Activated CD4-positive, alpha-beta memory T cell treated with anti-CD3 and anti-CD28 coated beads for 36 hours (primary cell): ENCODE measurements at regions of chr12 and their contacts with region 1.

Region 1: DNA sequence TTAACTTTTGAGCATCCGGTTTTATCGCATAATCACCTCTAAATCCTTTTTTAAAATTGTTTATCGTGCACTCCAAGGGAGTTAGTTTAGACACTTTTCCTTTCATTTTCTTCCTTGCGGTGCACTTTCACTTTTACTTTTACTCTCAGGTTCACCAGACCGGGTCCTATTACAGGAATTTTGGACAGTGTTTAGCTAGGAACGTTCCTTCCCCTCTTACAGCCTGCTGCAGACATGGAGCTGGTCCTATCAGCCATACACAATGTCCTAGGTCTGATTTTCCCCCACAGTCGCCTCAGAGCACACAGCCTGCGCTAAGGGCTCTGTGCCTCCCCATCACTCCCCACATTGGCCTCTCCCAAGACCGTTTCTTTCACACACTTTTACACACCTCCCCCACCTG is 103.9 kb downstream of the ALG10 start:
- DNase-seq: no peak
- H3K4me3 Mint-ChIP-seq: peak overlapping the region; percentile 9
- H3K27ac Mint-ChIP-seq: no peak overlapping the region
- H3K4me1 Mint-ChIP-seq: peaks cover 8% of the 10 kb centered on the region
- H3K27me3 Mint-ChIP-seq: peaks cover 17% of the 10 kb centered on the region

Region 2: GRCh38 chr12:34218165-34219045 is 92.2 kb after region 1 on chr12:
- CTCF ChIA-PET with region 1: interaction called, 9 read pairs
- POLR2A ChIA-PET with region 1: no interaction called
- intact Hi-C with region 1: loop called (anchors 1 kb)
- DNase-seq: peak; percentile 73
- H3K4me3 Mint-ChIP-seq: peak overlapping the region; percentile 56
- H3K27ac Mint-ChIP-seq: no peak overlapping the region
- H3K4me1 Mint-ChIP-seq: peaks cover 2% of the 10 kb centered on the region
- H3K27me3 Mint-ChIP-seq: peaks cover 2% of the 10 kb centered on the region

Region 3: DNA sequence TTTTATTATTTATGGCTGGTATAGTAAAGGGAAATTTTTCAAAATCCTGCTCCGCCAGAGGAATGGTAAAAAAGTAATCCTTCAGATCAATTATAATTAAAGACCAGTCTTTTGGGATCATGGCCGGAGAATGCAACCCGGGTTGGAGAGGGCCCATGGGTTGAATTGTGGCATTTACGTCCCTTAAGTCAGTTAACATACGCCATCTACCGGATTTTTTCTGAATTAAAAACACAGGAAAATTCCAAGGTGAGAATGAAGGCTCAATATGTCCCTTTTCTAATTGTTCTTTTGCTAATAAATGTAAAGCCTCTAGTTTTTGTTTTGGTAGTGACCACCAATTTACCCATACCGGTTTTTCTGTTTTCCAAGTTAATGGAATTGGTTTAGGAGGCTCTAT is 498.9 kb after region 1 on chr12:
- CTCF ChIA-PET with region 1: no interaction called
- POLR2A ChIA-PET with region 1: no interaction called
- intact Hi-C with region 1: loop called (anchors 10 kb)
- DNase-seq: no peak
- H3K4me3 Mint-ChIP-seq: no peak overlapping the region
- H3K27ac Mint-ChIP-seq: no peak overlapping the region
- H3K4me1 Mint-ChIP-seq: no peaks in the 10 kb centered on the region
- H3K27me3 Mint-ChIP-seq: no peaks in the 10 kb centered on the region